Naive thymus-derived CD8-positive, alpha-beta T cell (primary cell): ENCODE measurements at regions of chr12 and their contacts with region 1.

Region 1: DNA sequence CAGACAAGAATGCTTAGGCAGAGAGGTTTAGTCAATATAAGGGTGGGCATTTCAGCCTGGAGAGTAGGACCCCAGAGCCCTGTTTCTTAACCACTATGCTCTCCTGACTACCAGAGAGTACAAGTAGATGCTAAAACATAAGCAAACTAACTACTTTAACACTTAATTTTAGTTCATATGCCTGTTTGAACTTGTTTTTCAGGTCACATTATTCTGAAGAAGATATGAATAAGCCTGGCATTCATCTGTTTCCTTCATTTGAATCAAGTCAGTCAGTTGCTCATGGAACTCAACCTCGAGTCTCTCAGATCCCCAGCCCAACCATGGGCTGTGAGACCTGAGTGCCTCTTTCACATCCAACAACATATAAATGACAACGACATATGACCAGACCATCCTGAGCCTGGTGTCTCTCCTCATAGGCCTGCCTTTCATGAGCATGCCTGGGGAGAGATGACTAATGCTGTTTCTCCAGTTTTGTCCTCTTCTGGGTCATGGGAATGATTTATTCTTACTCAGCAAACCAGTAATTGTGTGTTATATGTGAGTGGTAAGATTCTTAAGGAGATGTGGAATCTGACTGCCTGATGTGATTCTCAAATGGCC is 251.1 kb upstream of the BTG1 start:
- DNase-seq: no peak
- ATAC-seq: no peak
- H3K4me3 Mint-ChIP-seq: peak overlapping the region in 8 of 10 donors; percentile 18 to 94 (median 53)
- H3K27ac Mint-ChIP-seq: peak overlapping the region; percentile 95 to 99 (median 97)
- H3K4me1 Mint-ChIP-seq: peaks cover 48 to 98% (median 92%) of the 10 kb centered on the region in 4 donors
- H3K27me3 Mint-ChIP-seq: no peaks in the 10 kb centered on the region

Region 2: GRCh38 chr12:92378682-92379479 is 17.9 kb before region 1 on chr12:
- POLR2A ChIA-PET with region 1: interaction called, 11 read pairs
- DNase-seq: peak in 5 of 10 donors; percentile 7 to 65 (median 38)
- ATAC-seq: peak; percentile 89 to 92
- H3K4me3 Mint-ChIP-seq: peak overlapping the region in 9 of 10 donors; percentile 7 to 73 (median 45)
- H3K27ac Mint-ChIP-seq: peak overlapping the region; percentile 80 to 98 (median 92)
- H3K4me1 Mint-ChIP-seq: peaks cover 37 to 71% (median 62%) of the 10 kb centered on the region in 4 donors
- H3K27me3 Mint-ChIP-seq: no peaks in the 10 kb centered on the region